ENCODE measurements at regions of chr6 and their contacts with region 1.

Region 1: DNA sequence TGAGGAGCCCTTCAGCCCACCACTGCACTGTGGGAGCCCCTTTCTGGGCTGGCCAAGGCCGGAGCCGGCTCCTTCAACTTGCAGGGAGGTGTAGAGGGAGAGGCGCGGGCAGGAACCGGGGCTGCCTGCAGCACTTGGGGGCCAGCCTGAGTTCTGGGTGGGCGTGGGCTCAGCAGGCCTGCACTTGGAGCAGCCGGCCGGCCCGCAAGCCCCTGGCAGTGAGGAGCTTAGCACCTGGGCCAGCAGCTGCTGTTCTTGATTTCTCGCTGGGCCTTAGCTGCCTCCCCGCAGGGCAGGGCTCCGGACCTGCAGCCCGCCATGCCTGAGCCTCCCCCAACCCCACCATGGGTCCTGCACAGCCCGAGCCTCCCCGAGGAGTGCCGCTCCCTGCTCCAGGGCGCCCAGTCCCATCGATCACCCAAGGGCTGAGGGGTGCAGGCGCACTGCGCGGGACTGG is 101.7 kb upstream of the ADGRB3 start:
- DNase-seq: no peak
- ATAC-seq: no peak
- H3K4me3 Mint-ChIP-seq: no peak overlapping the region
- H3K27ac Mint-ChIP-seq: no peak overlapping the region
- H3K4me1 Mint-ChIP-seq: no peaks in the 10 kb centered on the region
- H3K27me3 Mint-ChIP-seq: no peaks in the 10 kb centered on the region

Region 2: GRCh38 chr6:67064323-67064722 is 1469.0 kb before region 1 on chr6:
- CTCF ChIA-PET with region 1: no interaction called
- POLR2A ChIA-PET with region 1: no interaction called
- intact Hi-C with region 1: loop called in 1 of 2 experiments (anchors 5 kb)
- DNase-seq: no peak
- ATAC-seq: no peak
- H3K4me3 Mint-ChIP-seq: no peak overlapping the region
- H3K27ac Mint-ChIP-seq: no peak overlapping the region
- H3K4me1 Mint-ChIP-seq: no peaks in the 10 kb centered on the region
- H3K27me3 Mint-ChIP-seq: no peaks in the 10 kb centered on the region

Region 3: DNA sequence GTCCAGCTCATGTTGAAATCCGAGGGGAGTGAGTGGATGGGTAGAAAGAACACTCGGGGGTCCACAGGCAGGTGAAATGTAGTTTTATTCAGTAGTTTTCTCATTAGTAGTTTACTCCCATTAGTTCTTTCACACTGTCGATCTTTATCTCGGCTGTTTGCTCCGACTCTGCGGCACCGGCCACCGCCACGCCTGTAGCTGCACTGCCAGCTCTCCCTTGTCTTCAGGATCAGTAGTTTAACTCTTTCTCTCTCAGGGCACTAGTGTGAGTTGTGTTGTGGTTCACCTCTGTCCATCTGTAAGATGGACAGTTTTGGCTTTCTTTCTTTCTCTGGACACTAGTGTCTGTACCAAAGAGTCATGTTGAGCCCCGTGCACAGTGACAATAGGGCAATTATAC is 1067.8 kb after region 1 on chr6:
- CTCF ChIA-PET with region 1: no interaction called
- POLR2A ChIA-PET with region 1: no interaction called
- intact Hi-C with region 1: no loop called
- DNase-seq: no peak
- ATAC-seq: no peak
- H3K4me3 Mint-ChIP-seq: no peak overlapping the region
- H3K27ac Mint-ChIP-seq: no peak overlapping the region
- H3K4me1 Mint-ChIP-seq: no peaks in the 10 kb centered on the region
- H3K27me3 Mint-ChIP-seq: peaks cover 5% of the 10 kb centered on the region